Activated CD4-positive, alpha-beta T cell treated with anti-CD3 and anti-CD28 coated beads for 36 hours (primary cell): ENCODE measurements at regions of chr6 and their contacts with region 1.

Region 1: GRCh38 chr6:106339334-106340029 is 13.9 kb upstream of the ATG5 start:
- DNase-seq: peak; percentile 68
- ATAC-seq: peak; percentile 98
- H3K4me3 Mint-ChIP-seq: no peak overlapping the region
- H3K27ac Mint-ChIP-seq: no peak overlapping the region
- H3K4me1 Mint-ChIP-seq: peaks cover 5% of the 10 kb centered on the region
- H3K27me3 Mint-ChIP-seq: peaks cover 34% of the 10 kb centered on the region

Region 2: GRCh38 chr6:106315765-106316374 is 23.6 kb before region 1 on chr6:
- CTCF ChIA-PET with region 1: interaction called, 12 read pairs
- POLR2A ChIA-PET with region 1: no interaction called
- intact Hi-C with region 1: no loop called
- DNase-seq: peak; percentile 12
- ATAC-seq: peak; percentile 66
- H3K4me3 Mint-ChIP-seq: no peak overlapping the region
- H3K27ac Mint-ChIP-seq: peak overlapping the region; percentile 77
- H3K4me1 Mint-ChIP-seq: peaks cover 62% of the 10 kb centered on the region
- H3K27me3 Mint-ChIP-seq: no peaks in the 10 kb centered on the region

Region 3: GRCh38 chr6:106360410-106360988 is 21.0 kb after region 1 on chr6 and contains the start of gene CRYBG1:
- CTCF ChIA-PET with region 1: interaction called, 11 read pairs
- POLR2A ChIA-PET with region 1: no interaction called
- intact Hi-C with region 1: loop called in 1 of 2 experiments (anchors 1 kb)
- DNase-seq: peak; percentile 84
- ATAC-seq: peak; percentile 94
- H3K4me3 Mint-ChIP-seq: peak within 1 kb of the TSS; percentile 69
- H3K27ac Mint-ChIP-seq: peak within 1 kb of the TSS; percentile 19
- H3K4me1 Mint-ChIP-seq: peaks cover 11% of the 10 kb centered on the region
- H3K27me3 Mint-ChIP-seq: peaks cover 44% of the 10 kb centered on the region
- total RNA-seq, gene CRYBG1: 26.2 to 26.6 TPM

Region 4: GRCh38 chr6:106561686-106562405 is 222.4 kb after region 1 on chr6:
- CTCF ChIA-PET with region 1: interaction called, 17 read pairs
- POLR2A ChIA-PET with region 1: no interaction called
- intact Hi-C with region 1: loop called (anchors 1 to 2 kb)
- DNase-seq: no peak
- ATAC-seq: no peak
- H3K4me3 Mint-ChIP-seq: no peak overlapping the region
- H3K27ac Mint-ChIP-seq: no peak overlapping the region
- H3K4me1 Mint-ChIP-seq: peaks cover 20% of the 10 kb centered on the region
- H3K27me3 Mint-ChIP-seq: no peaks in the 10 kb centered on the region

Region 5: GRCh38 chr6:106997390-106998158 is 658.1 kb after region 1 on chr6:
- CTCF ChIA-PET with region 1: interaction called, 12 read pairs
- POLR2A ChIA-PET with region 1: no interaction called
- intact Hi-C with region 1: loop called in 1 of 2 experiments (anchors 5 kb)
- DNase-seq: peak; percentile 80
- ATAC-seq: peak; percentile 63
- H3K4me3 Mint-ChIP-seq: no peak overlapping the region
- H3K27ac Mint-ChIP-seq: no peak overlapping the region
- H3K4me1 Mint-ChIP-seq: no peaks in the 10 kb centered on the region
- H3K27me3 Mint-ChIP-seq: peaks cover under 1% of the 10 kb centered on the region